Mammary epithelial cell (primary cell): ENCODE measurements at regions of chr14 and their contacts with region 1.

Region 1: DNA sequence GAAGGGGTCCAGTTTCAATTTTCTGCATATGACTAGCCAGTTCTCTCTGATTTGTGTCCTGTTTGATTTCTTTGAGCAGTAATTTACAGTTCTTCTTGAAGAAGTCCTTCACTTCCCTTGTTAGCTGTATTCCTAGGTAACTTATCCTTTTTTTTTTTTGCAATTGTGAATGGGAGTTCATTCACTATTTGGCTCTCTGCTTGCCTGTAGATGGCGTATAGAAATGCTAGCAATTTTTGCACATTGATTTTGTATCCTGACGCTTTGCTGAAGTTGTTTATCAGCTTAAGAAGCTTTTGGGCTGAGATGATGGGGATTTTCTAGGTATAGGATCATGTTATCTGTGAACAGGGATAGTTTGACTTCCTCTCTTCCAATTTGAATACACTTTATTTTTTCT is 77.6 kb upstream of the NID2 start:
- DNase-seq: no peak
- H3K4me3 ChIP-seq: no peak overlapping the region
- H3K27ac ChIP-seq: no peak overlapping the region
- H3K4me1 ChIP-seq: no peaks in the 10 kb centered on the region
- H3K27me3 ChIP-seq: peaks cover 9% of the 10 kb centered on the region
- CTCF ChIP-seq: peak in 1 of 2 donors; percentile 24

Region 2: DNA sequence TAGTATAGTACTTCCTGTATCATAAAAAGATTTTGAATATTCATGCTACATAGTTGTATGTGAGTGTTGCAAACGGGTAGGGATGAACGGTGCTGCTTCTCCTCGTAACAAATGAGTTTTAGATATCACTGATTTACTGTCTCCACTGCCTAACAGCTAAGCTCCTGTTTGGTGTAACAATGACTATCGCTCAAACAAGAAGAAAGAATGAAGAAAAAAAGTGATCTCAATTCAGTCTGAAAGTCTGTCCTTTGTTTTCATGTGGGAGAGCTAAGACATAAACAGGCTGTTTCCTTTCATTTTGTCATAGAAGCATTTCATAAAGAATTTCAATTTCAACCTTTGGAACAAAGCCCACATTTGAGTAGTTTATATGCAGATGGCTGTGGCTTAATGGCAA is 183.2 kb before region 1 on chr14:
- CTCF ChIA-PET with region 1: no interaction called
- dilution Hi-C with region 1: no loop called
- in situ Hi-C with region 1: no loop called
- intact Hi-C with region 1: no loop called
- DNase-seq: no peak
- H3K4me3 ChIP-seq: no peak overlapping the region
- H3K27ac ChIP-seq: no peak overlapping the region
- H3K4me1 ChIP-seq: no peaks in the 10 kb centered on the region
- H3K27me3 ChIP-seq: peaks cover 2% of the 10 kb centered on the region
- CTCF ChIP-seq: no peak

Region 3: GRCh38 chr14:52272375-52272774 is 125.9 kb after region 1 on chr14:
- CTCF ChIA-PET with region 1: no interaction called
- dilution Hi-C with region 1: no loop called
- in situ Hi-C with region 1: no loop called
- intact Hi-C with region 1: loop called (anchors 1 kb)
- DNase-seq: peak; percentile 14
- H3K4me3 ChIP-seq: no peak overlapping the region
- H3K27ac ChIP-seq: no peak overlapping the region
- H3K4me1 ChIP-seq: peaks cover 6% of the 10 kb centered on the region
- H3K27me3 ChIP-seq: peaks cover 22% of the 10 kb centered on the region
- CTCF ChIP-seq: peak; percentile 27 to 45

Region 4: GRCh38 chr14:52351233-52352060 is 204.9 kb after region 1 on chr14:
- CTCF ChIA-PET with region 1: no interaction called
- dilution Hi-C with region 1: no loop called
- in situ Hi-C with region 1: no loop called
- intact Hi-C with region 1: no loop called
- DNase-seq: peak; percentile 49
- H3K4me3 ChIP-seq: no peak overlapping the region
- H3K27ac ChIP-seq: no peak overlapping the region
- H3K4me1 ChIP-seq: peaks cover 44% of the 10 kb centered on the region
- H3K27me3 ChIP-seq: no peaks in the 10 kb centered on the region
- CTCF ChIP-seq: no peak

Region 5: GRCh38 chr14:52467515-52468266 is 321.2 kb after region 1 on chr14:
- CTCF ChIA-PET with region 1: interaction called, 14 read pairs
- dilution Hi-C with region 1: no loop called
- in situ Hi-C with region 1: no loop called
- intact Hi-C with region 1: no loop called
- DNase-seq: no peak
- H3K4me3 ChIP-seq: no peak overlapping the region
- H3K27ac ChIP-seq: no peak overlapping the region
- H3K4me1 ChIP-seq: no peaks in the 10 kb centered on the region
- H3K27me3 ChIP-seq: no peaks in the 10 kb centered on the region
- CTCF ChIP-seq: no peak

Region 6: GRCh38 chr14:53055003-53055402 is 908.5 kb after region 1 on chr14:
- CTCF ChIA-PET with region 1: no interaction called
- dilution Hi-C with region 1: no loop called
- in situ Hi-C with region 1: no loop called
- intact Hi-C with region 1: no loop called
- DNase-seq: peak; percentile 40
- H3K4me3 ChIP-seq: no peak overlapping the region
- H3K27ac ChIP-seq: no peak overlapping the region
- H3K4me1 ChIP-seq: no peaks in the 10 kb centered on the region
- H3K27me3 ChIP-seq: no peaks in the 10 kb centered on the region
- CTCF ChIP-seq: peak; percentile 72 to 82